Activated CD4-positive, alpha-beta memory T cell treated with anti-CD3 and anti-CD28 coated beads for 36 hours (primary cell): ENCODE measurements at regions of chr2 and their contacts with region 1.

Region 1: DNA sequence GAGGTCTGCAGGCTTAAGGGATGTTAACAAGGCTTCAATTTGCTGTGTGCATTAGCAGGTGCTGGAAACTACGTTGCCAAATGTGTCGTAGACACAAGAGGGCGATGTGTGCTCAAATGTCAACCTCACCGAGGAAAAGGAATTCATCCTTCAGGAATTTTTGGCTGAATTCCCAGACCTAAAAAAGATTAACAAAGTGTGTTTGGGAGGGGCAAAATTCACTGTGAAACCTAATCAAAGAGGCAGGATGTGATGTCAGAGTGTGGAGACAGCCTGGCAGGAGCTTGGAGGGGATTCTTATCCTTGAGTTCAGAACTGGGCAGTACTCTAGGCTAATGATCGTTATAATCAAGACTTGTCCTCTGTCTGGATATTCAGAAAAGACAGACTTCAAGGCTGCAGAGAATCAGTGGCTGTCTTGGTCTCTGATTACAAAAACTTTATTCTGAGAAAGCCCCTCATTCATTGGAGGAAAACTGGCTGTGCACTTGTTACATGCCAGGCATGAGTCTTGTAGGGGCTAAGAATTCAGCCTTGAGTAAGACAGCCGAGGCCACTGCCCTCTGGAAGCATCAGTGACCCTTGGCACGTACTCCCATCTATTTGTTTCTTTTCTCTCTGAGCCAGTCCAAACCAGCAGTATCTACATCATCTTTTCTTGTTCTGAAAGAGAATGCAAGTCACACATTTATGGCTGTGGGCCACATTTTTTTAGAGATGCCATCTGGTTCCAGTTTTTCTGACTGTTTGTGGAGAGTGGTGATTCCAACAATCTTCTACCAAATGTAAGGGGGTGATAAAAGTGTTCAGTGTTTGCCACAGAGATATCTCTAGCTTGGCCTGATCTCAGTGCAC is 18.7 kb upstream of the SCYGR1 start:
- DNase-seq: no peak
- H3K4me3 Mint-ChIP-seq: no peak overlapping the region
- H3K27ac Mint-ChIP-seq: no peak overlapping the region
- H3K4me1 Mint-ChIP-seq: peaks cover 34% of the 10 kb centered on the region
- H3K27me3 Mint-ChIP-seq: no peaks in the 10 kb centered on the region

Region 2: DNA sequence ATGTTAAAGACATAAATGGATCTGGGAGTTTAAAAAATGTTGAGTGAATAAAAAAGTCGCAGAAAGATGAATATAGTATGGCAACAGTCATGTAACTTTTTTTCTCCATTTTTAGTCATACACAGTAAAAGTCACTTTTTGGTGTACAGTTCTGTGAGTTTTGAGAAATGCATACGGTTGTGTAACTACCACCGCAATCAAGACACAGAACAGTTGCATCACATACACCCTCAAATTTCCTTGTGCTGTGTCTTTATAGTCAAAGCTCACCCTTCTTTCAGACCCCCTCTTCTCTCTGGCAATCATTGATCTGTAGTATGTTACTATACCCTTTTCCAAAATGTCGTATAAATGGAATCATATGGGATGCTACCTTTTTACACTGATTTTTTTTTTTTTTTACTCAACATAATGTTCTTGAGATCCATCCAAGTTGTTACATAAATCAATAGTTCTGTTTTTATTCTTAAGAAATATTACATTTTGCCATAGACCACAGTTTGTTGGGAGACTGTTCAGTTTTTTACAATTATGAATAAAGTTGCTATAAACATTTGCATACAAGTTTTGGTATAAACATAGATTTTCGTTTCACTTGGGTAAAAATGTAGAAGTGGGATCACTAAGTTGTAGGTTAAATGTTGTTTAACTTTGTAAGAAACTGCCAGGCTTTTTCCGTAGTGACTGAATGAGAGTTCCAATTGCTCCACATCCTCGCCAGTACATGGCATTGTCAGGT is 30.2 kb after region 1 on chr2:
- CTCF ChIA-PET with region 1: no interaction called
- POLR2A ChIA-PET with region 1: no interaction called
- intact Hi-C with region 1: no loop called
- DNase-seq: no peak
- H3K4me3 Mint-ChIP-seq: no peak overlapping the region
- H3K27ac Mint-ChIP-seq: no peak overlapping the region
- H3K4me1 Mint-ChIP-seq: no peaks in the 10 kb centered on the region
- H3K27me3 Mint-ChIP-seq: no peaks in the 10 kb centered on the region

Region 3: DNA sequence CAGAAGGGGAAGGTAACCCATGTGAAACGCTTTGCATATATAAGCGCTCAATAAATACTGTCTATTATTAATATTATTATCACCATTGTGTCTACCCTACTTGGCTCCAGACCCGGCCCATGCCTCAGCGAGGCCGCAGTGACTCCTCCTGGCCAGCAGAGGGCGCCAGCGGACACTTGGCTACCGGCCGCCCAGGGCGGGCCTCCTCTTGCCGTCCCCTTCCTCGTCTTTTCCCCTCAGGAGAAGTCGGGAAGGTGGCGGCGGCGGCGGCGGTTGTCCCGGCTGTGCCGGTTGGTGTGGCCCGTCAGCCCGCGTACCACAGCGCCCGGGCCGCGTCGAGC is 65.5 kb after region 1 on chr2 and contains the start of gene AGFG1:
- CTCF ChIA-PET with region 1: interaction called, 12 read pairs
- POLR2A ChIA-PET with region 1: interaction called, 6 read pairs
- intact Hi-C with region 1: no loop called
- DNase-seq: peak; percentile 90
- H3K4me3 Mint-ChIP-seq: peak within 1 kb of the TSS; percentile 82
- H3K27ac Mint-ChIP-seq: peak within 1 kb of the TSS; percentile 77
- H3K4me1 Mint-ChIP-seq: peaks cover 50% of the 10 kb centered on the region
- H3K27me3 Mint-ChIP-seq: no peaks in the 10 kb centered on the region
- total RNA-seq, gene AGFG1: 119 to 127 TPM

Region 4: GRCh38 chr2:227578651-227579050 is 172.2 kb after region 1 on chr2:
- CTCF ChIA-PET with region 1: interaction called, 3 read pairs
- POLR2A ChIA-PET with region 1: no interaction called
- intact Hi-C with region 1: loop called (anchors 10 kb)
- DNase-seq: no peak
- H3K4me3 Mint-ChIP-seq: no peak overlapping the region
- H3K27ac Mint-ChIP-seq: no peak overlapping the region
- H3K4me1 Mint-ChIP-seq: no peaks in the 10 kb centered on the region
- H3K27me3 Mint-ChIP-seq: peaks cover 26% of the 10 kb centered on the region